Activated naive CD8-positive, alpha-beta T cell treated with anti-CD3 and anti-CD28 coated beads, Interleukin-2, amount 10 ng/mL, durations not matched to agents 7 days and 5 days (primary cell): ENCODE measurements at regions of chr22 and their contacts with region 1.

Region 1: GRCh38 chr22:23857606-23858483 is at the start of gene SLC2A11:
- DNase-seq: peak; percentile 93
- ATAC-seq: peak; percentile 98
- H3K4me3 Mint-ChIP-seq: peak within 1 kb of the TSS; percentile 81
- H3K27ac Mint-ChIP-seq: peak within 1 kb of the TSS; percentile 90
- H3K4me1 Mint-ChIP-seq: peaks cover 14% of the 10 kb centered on the region
- H3K27me3 Mint-ChIP-seq: peaks cover 7% of the 10 kb centered on the region
- total RNA-seq, gene SLC2A11: 10.0 to 12.1 TPM

Region 2: GRCh38 chr22:23767673-23768548 is 89.9 kb before region 1 on chr22 and contains the start of gene CHCHD10:
- POLR2A ChIA-PET with region 1: interaction called, 15 read pairs
- DNase-seq: peak; percentile 91
- ATAC-seq: peak; percentile 49
- H3K4me3 Mint-ChIP-seq: peak within 1 kb of the TSS; percentile 87
- H3K27ac Mint-ChIP-seq: peak within 1 kb of the TSS; percentile 81
- H3K4me1 Mint-ChIP-seq: peaks cover 34% of the 10 kb centered on the region
- H3K27me3 Mint-ChIP-seq: peaks cover under 1% of the 10 kb centered on the region
- total RNA-seq, gene CHCHD10: 99.8 to 111 TPM

Region 3: GRCh38 chr22:23820748-23821211 is 37.1 kb before region 1 on chr22:
- POLR2A ChIA-PET with region 1: interaction called, 11 read pairs
- DNase-seq: peak; percentile 73
- ATAC-seq: peak; percentile 96
- H3K4me3 Mint-ChIP-seq: peak overlapping the region; percentile 75
- H3K27ac Mint-ChIP-seq: peak overlapping the region; percentile 97
- H3K4me1 Mint-ChIP-seq: peaks cover 34% of the 10 kb centered on the region
- H3K27me3 Mint-ChIP-seq: no peaks in the 10 kb centered on the region

Region 4: DNA sequence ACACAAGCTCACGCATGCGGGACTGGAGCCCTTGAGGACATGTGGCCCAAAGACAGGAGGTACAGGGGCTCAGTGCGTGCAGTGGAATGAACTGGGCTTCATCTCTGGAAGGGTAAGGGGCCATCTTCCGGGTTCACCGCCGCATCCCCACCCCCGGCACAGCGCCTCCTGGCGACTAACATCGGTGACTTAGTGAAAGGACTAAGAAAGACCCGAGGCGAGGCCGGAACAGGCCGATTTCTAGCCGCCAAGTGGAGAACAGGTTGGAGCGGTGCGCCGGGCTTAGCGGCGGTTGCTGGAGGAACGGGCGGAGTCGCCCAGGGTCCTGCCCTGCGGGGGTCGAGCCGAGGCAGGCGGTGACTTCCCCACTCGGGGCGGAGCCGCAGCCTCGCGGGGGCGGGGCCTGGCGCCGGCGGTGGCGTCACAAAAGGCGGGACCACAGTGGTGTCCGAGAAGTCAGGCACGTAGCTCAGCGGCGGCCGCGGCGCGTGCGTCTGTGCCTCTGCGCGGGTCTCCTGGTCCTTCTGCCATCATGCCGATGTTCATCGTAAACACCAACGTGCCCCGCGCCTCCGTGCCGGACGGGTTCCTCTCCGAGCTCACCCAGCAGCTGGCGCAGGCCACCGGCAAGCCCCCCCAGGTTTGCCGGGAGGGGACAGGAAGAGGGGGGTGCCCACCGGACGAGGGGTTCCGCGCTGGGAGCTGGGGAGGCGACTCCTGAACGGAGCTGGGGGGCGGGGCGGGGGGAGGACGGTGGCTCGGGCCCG is 36.3 kb after region 1 on chr22 and contains the start of gene MIF:
- POLR2A ChIA-PET with region 1: interaction called, 39 read pairs
- DNase-seq: peak; percentile 100
- ATAC-seq: peak; percentile 89
- H3K4me3 Mint-ChIP-seq: peak within 1 kb of the TSS; percentile 96
- H3K27ac Mint-ChIP-seq: peak within 1 kb of the TSS; percentile 99
- H3K4me1 Mint-ChIP-seq: peaks cover 22% of the 10 kb centered on the region
- H3K27me3 Mint-ChIP-seq: no peaks in the 10 kb centered on the region
- total RNA-seq, gene MIF: 776 to 848 TPM